CD14-positive monocyte (primary cell): ENCODE measurements at regions of chrX and their contacts with region 1.

Region 1: DNA sequence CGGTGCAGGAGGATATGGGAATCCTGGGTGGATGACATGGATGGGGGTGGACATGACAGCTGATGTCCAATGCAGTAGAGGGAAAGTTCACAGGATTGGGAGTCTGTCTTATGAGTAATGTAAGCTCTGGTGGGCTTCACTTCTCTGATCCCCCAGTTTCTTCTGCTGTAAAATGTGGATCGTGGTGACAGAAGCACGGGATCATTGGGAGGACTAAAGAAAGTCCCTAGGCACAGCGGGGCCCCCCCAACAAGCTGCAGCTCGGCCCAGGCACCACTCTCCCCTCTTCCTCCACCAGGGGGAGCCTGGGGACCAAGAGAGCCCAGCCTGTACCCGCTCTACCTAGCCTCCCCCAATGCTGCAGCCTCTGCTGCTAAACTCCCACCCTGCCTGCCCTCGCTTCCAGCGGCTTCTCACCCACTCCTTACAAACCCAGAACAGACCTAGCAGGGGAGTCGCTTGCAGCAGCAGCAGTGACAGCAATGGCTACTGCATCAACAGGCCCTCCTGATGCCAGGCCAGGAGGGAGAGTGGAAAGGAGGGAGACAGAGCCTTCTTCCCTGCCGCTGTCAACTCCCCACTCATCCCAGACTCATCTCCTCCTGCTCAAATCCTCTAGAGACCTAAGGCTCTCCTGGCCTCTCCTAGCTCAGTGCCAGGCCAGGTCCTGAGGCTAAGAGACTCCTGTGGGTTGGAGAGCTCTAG is 36.1 kb upstream of the IQSEC2 start:
- DNase-seq: peak; percentile 43 to 52 (median 51)
- H3K4me3 ChIP-seq: no peak overlapping the region
- H3K4me3 Mint-ChIP-seq: peak overlapping the region; percentile 39 to 71
- H3K27ac ChIP-seq: no peak overlapping the region
- H3K27ac Mint-ChIP-seq: peak overlapping the region in 2 of 7 donors; percentile 46 to 58
- H3K4me1 ChIP-seq: peaks cover 30 to 60% of the 10 kb centered on the region in 2 donors
- H3K4me1 Mint-ChIP-seq: peaks cover 53% of the 10 kb centered on the region
- H3K27me3 ChIP-seq: peaks cover 12 to 21% of the 10 kb centered on the region in 2 donors
- H3K27me3 Mint-ChIP-seq: peaks cover 21 to 61% (median 26%) of the 10 kb centered on the region in 3 donors
- CTCF ChIP-seq: peak; percentile 77

Region 2: DNA sequence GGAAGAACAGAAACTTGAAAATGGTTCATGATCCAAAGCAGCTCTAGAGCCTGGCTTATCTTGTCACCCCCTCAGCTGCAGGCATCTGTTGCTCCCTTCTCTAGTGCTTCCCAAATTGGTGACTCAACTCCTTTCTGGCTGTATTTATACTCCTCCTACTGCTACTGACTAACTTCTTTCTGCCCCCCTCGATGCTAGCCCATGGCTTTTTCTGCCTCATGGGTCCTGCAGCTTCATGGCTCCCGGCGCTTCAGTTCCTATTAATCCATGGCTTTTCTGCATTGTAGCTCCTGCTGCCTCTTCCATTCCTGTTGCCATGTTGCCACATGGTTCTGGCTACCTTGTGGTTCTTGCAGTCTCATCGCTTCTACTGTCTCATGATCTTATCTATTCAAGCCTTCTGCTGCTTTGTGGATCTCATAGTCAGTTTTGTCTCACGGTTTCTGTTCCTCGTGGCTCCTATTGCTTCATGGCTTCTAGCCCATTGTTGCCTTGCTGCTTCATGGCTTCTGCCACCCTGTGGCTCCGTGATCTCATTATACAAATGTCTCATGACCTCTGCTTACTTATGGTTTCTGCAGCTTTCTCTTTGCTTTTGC is 56.8 kb after region 1 on chrX:
- intact Hi-C with region 1: loop called (anchors 5 to 10 kb)
- DNase-seq: peak; percentile 66 to 69 (median 68)
- H3K4me3 ChIP-seq: peak overlapping the region in 1 of 3 experiments; percentile 5
- H3K4me3 Mint-ChIP-seq: peak overlapping the region; percentile 50 to 59
- H3K27ac ChIP-seq: peak overlapping the region; percentile 55 to 60
- H3K27ac Mint-ChIP-seq: peak overlapping the region; percentile 64 to 94 (median 88)
- H3K4me1 ChIP-seq: peaks cover 34 to 37% of the 10 kb centered on the region in 2 donors
- H3K4me1 Mint-ChIP-seq: peaks cover 40% of the 10 kb centered on the region
- H3K27me3 ChIP-seq: no peaks in the 10 kb centered on the region
- H3K27me3 Mint-ChIP-seq: peaks cover 0 to 2% (median 0%) of the 10 kb centered on the region in 3 donors
- CTCF ChIP-seq: no peak

Region 3: GRCh38 chrX:53441531-53442321 is 124.2 kb after region 1 on chrX:
- intact Hi-C with region 1: loop called (anchors 2 to 5 kb)
- DNase-seq: peak; percentile 70 to 75 (median 73)
- H3K4me3 ChIP-seq: peak overlapping the region; percentile 52 to 80 (median 63)
- H3K4me3 Mint-ChIP-seq: peak overlapping the region; percentile 82 to 92
- H3K27ac ChIP-seq: peak overlapping the region; percentile 94 to 99
- H3K27ac Mint-ChIP-seq: peak overlapping the region; percentile 92 to 98 (median 95)
- H3K4me1 ChIP-seq: peaks cover 23 to 41% of the 10 kb centered on the region in 2 donors
- H3K4me1 Mint-ChIP-seq: peaks cover 23% of the 10 kb centered on the region
- H3K27me3 ChIP-seq: no peaks in the 10 kb centered on the region
- H3K27me3 Mint-ChIP-seq: peaks cover 0 to 15% (median 0%) of the 10 kb centered on the region in 3 donors
- CTCF ChIP-seq: no peak